Pancreas (tissue), 10 donors: ENCODE measurements at regions of chr10 and their contacts with region 1.

Region 1: DNA sequence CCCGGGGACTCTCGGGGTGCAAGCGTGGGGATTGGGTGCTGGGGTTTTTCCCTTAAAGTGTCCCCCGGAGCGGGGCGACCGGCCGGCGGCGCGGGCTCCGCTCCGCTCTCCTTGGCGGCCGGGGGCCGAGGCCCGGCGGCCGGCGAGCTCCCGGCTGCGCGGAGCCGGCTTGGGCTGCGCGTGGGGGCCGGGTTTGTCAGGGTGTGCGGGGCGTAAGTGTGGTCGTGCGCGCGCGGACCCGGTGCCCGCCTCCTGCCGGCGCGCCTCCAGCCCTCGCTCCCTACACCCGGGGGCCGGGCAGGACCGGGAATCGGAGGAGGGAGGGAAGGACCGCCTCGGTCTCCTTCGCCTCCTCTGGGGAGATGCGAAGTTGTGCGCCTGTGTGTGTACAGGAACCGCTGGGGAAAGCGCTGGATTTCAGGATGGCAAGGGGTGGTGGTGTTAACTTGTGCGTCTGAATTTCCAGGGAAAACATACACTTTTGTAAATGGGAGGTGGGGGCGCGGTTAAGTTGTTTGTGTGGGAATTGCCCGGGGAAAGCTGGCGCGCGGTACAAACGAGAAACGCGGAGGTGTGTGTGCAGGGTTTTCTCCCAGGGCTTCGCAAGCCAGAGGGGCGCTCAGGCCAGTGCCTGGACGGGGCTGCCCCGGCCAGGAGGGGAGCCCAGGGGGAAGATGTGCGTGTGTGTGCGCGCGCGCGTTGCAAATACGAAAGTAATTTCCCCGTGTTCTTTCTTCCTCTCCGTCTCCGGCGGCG is 737 bp downstream of the ZMIZ1 start:
- DNase-seq: peak; percentile 53 to 85 (median 66)
- ATAC-seq: peak in 2 of 4 donors; percentile 1 to 2
- H3K4me3 ChIP-seq: peak overlapping the region; percentile 62 to 87 (median 72)
- H3K27ac ChIP-seq: peak overlapping the region; percentile 93 to 96 (median 94)
- H3K4me1 ChIP-seq: peaks cover 27 to 39% (median 34%) of the 10 kb centered on the region in 3 donors
- H3K27me3 ChIP-seq: no peaks in the 10 kb centered on the region
- CTCF ChIP-seq: no peak

Region 2: DNA sequence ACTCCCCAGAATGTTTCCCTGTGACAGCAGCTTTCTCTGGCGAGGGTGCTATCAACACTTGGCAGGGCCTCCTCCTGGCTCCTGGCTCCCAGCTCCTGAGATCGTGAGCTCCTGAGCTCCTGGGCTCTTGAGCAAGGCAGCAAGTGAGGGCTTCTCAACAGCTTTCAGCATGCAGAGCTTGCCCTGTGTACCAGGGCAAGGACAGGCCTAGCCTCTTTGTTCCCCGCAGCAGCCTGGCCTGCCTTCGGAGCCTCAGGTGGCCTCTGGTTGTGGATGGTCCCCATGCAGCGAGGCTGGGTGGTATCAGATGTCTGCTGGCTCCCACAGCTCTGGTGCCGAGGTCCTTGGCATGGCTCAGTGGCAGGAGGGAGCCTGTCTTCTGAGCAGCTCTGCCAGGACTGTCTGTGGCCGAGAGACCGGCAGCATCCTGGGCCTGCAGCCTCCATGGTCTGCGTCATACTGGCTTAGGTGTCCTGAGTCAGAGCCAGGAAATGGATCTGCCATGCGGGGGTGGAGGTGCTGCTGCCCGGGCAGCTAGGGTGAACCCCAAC is 43.5 kb after region 1 on chr10:
- intact Hi-C with region 1: loop called in 1 of 3 experiments (anchors 5 kb)
- DNase-seq: no peak
- ATAC-seq: peak; percentile 14 to 25 (median 22)
- H3K4me3 ChIP-seq: no peak overlapping the region
- H3K27ac ChIP-seq: peak overlapping the region; percentile 13 to 75 (median 53)
- H3K4me1 ChIP-seq: peaks cover 53 to 68% (median 55%) of the 10 kb centered on the region in 3 donors
- H3K27me3 ChIP-seq: no peaks in the 10 kb centered on the region
- CTCF ChIP-seq: no peak

Region 3: GRCh38 chr10:79184145-79184625 is 114.7 kb after region 1 on chr10:
- intact Hi-C with region 1: loop called in 1 of 3 experiments (anchors 10 kb)
- DNase-seq: peak in 4 of 6 donors; percentile 63 to 73 (median 66)
- ATAC-seq: peak; percentile 72 to 84 (median 80)
- H3K4me3 ChIP-seq: no peak overlapping the region
- H3K27ac ChIP-seq: peak overlapping the region; percentile 41 to 68 (median 60)
- H3K4me1 ChIP-seq: peaks cover 37 to 71% (median 46%) of the 10 kb centered on the region in 3 donors
- H3K27me3 ChIP-seq: no peaks in the 10 kb centered on the region
- CTCF ChIP-seq: no peak

Region 4: GRCh38 chr10:79195091-79195923 is 125.8 kb after region 1 on chr10:
- intact Hi-C with region 1: loop called in 1 of 3 experiments (anchors 10 kb)
- DNase-seq: peak; percentile 79 to 94 (median 90)
- ATAC-seq: peak; percentile 91 to 95 (median 93)
- H3K4me3 ChIP-seq: no peak overlapping the region
- H3K27ac ChIP-seq: peak overlapping the region in 3 of 4 donors; percentile 28 to 48 (median 35)
- H3K4me1 ChIP-seq: peaks cover 6 to 11% (median 7%) of the 10 kb centered on the region in 3 donors
- H3K27me3 ChIP-seq: no peaks in the 10 kb centered on the region
- CTCF ChIP-seq: peak; percentile 94 to 99 (median 96)